GM10248 (cell line): ENCODE measurements at regions of chr5 and their contacts with region 1.

Region 1: DNA sequence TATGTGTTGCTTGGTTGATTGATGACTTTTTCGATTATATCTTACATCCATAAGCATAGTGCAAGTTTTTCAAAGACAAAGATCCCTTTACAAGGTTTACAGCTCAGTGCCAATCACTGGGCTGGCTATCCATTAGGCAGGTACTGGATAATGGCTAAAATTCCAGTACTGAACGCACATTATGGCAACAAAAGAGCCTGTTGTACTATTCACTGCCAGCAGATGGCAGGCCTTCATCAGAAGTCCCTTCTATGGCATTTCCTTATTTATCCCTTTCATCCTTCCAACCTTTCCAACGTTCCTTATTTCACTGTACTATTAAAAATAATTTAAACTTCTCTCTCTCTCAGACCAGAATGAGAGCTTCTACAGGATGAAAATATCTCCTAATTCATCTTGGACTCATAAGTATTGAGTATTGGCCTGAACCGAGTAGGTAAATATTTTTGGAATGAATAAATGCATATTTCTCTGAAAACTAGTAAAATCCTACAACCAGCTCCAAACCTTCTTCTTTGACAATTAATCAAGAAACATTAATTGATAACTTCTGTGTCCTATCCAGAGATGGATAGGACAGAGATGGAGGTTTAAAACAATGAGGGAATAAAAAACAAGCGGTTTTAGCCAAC is 6.7 kb upstream of the WNT8A start:
- DNase-seq: peak; percentile 63
- CTCF ChIP-seq: peak; percentile 71

Region 2: DNA sequence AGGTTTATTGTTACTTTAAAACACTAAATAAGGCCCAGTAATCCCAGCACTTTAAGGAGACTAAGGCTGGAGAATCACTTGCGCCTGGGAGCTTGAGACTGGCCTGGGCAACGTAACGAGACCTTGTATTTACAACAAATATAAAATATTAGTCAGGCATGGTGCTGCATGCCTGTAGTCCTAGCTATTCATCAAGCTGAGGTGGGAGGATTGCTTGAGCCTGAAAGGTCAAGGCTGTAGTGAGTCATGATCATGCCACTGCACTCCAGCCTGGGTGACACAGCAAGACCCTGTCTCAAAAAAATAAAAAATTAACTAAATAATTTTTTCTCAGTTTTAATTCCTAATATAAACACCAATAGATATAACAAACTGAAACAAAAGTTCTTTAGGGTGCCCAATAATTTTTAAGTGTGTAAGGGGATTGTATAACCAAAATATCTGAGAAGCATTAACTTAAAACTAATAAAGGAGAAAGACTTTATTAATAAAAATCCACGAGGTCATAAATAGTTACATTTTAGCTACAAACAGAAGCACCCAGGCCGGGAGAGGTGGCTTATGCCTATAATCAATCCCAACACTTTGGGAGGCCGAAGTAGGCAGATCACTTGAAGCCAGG is 77.0 kb before region 1 on chr5:
- CTCF ChIA-PET with region 1: no interaction called
- POLR2A ChIA-PET with region 1: no interaction called
- DNase-seq: no peak
- CTCF ChIP-seq: no peak

Region 3: GRCh38 chr5:138065102-138065501 is 12.1 kb before region 1 on chr5:
- CTCF ChIA-PET with region 1: interaction called, 37 read pairs
- POLR2A ChIA-PET with region 1: no interaction called
- DNase-seq: no peak
- CTCF ChIP-seq: no peak

Region 4: GRCh38 chr5:138110266-138110963 is 33.2 kb after region 1 on chr5:
- CTCF ChIA-PET with region 1: interaction called, 11 read pairs
- POLR2A ChIA-PET with region 1: no interaction called
- DNase-seq: no peak
- CTCF ChIP-seq: no peak

Region 5: DNA sequence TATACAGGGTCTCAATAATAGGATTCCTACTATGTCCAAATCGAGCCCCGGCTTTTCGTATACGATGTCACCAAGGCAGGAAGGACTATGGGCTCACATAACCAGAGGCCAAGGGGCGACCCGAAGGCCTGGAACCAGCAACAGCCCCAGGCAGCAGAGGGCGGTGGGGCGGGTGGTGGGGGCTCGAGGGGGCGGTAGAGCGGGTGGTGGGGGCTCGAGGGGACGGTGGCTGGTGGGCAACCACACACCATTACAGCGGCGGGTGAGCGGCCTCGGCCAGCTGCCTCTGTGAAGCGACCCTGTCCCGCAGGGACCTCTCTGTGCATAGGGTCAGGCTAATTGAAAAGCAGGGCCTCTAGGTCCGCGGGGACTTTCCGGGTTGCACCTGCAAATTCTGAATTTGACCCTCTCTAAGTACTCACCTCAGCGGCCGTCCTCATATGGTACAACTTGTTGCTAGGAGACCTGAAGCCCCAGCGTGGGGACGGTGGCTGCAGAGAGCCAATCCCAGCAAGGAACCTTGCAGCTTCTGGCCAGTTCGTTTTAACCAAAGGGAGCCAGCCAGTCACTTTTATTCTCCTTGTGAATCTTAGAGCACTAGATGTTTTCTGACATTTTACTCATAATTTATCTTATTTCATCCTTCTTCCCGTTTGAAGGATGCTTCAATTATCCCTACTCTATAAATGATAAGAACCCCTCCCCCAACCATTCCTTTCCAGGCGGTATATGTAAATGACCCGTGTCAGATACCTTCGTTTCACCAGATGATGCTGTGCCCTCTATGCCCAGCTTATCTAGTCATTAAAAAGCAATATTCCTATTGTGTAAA is 62.0 kb after region 1 on chr5 and contains the start of gene NME5:
- CTCF ChIA-PET with region 1: interaction called, 130 read pairs
- POLR2A ChIA-PET with region 1: no interaction called
- DNase-seq: peak; percentile 73
- CTCF ChIP-seq: no peak

Region 6: DNA sequence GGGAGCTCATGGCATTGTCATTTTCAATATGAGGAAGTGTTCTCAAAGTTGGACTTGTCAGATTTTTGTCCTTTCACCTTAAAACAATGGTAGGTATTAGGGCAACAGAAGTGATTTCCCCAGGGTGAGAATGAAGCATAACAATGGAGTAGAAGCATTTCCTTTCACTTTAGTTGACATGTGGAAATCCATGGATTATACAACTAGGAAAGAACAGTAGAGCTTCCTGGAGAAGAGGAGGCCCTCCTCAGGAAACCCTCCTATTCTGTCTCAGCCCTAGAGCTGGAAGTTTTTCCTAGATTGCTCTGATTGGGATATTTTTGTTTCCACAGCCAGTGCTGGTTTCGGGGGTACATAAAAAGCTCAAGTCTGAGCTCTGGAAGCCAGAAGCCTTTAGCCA is 347.9 kb after region 1 on chr5:
- CTCF ChIA-PET with region 1: no interaction called
- POLR2A ChIA-PET with region 1: no interaction called
- DNase-seq: no peak
- CTCF ChIP-seq: no peak